ENCODE measurements at regions of chr17 and their contacts with region 1.

Region 1: GRCh38 chr17:7856883-7857723 is at the start of gene NAA38:
- DNase-seq: peak; percentile 90 to 99 (median 93)

Region 2: DNA sequence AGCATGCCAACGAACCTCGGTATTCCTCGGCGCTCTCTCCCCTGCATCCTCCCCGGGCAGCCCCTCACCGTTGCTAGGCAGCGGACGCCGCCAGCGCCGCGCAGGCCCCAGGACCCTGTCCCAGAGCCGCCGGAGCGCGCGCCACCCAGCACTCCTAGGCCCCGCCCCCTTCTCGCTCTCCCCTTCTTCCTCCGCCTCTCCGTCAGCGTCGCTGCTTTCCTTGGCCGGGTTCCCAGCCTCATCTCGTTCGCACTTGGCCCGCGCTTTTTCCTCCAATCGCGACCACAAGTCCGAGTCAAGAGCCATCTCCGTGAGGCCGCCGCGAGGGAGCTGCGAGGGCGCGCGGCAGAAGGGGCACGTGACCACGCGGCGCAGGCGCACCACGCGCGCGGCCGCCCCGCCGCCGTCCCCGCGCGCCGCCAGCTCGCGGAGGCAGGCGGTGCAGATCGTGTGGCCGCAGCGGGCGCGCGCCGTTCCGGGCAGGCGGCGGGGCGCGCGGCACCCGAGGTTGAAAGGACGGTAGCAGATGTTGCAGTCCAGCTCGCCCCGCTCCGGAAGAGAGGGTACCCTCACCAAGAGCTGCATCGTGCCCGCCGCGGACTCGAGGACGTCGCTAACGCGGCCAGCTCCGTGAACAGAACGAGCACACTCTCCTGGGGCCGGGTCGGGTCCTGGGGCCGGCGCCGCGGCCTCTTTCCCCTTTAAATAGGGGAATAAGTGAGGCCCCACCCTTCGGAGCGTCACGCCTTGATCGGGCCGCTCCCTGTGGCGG is 58.7 kb after region 1 on chr17 and contains the start of gene RNF227:
- intact Hi-C with region 1: loop called (anchors 1 kb)
- DNase-seq: peak; percentile 77 to 97 (median 83)

Region 3: GRCh38 chr17:8041249-8041928 is 184.3 kb after region 1 on chr17:
- intact Hi-C with region 1: loop called (anchors 1 kb)
- DNase-seq: peak in 2 of 10 donors; percentile 26 to 43